Activated B cell treated with CpG ODN at 0.5 μM for 24 hours (primary cell): ENCODE measurements at regions of chr12 and their contacts with region 1.

Region 1: DNA sequence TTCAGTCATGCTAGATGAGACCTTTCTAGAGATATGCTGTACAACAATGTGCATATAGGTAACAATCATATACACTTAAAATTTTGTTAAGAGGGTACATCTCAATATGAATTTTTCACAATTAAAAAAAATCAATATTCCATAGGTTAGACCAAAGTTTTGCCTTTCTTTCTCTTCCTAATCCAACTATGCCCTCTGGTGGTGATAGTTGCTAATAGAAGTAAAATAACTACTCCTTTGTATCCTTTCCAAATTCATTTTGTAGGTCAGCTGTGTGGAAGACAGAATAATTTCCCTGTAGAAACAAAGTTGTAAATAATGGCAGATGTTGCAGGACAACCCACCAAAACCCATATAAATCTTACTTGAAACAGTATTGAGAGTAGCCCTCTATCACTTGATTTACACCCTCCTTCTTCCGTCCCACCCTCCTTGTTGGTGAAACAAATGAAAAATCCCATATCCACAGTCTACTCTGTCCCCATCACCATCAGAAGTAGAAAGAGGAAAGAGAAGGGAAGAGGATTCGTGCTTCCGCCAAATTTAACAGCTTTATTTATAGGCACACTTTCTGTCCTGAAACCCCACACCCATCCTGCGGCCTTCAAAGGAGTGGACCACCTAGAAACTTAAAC is 34.2 kb upstream of the KICS2 start:
- DNase-seq: no peak
- ATAC-seq: no peak
- H3K4me3 Mint-ChIP-seq: no peak overlapping the region
- H3K27ac Mint-ChIP-seq: no peak overlapping the region
- H3K4me1 Mint-ChIP-seq: no peaks in the 10 kb centered on the region
- H3K27me3 Mint-ChIP-seq: peaks cover 5% of the 10 kb centered on the region
- CTCF ChIP-seq: peak; percentile 32

Region 2: DNA sequence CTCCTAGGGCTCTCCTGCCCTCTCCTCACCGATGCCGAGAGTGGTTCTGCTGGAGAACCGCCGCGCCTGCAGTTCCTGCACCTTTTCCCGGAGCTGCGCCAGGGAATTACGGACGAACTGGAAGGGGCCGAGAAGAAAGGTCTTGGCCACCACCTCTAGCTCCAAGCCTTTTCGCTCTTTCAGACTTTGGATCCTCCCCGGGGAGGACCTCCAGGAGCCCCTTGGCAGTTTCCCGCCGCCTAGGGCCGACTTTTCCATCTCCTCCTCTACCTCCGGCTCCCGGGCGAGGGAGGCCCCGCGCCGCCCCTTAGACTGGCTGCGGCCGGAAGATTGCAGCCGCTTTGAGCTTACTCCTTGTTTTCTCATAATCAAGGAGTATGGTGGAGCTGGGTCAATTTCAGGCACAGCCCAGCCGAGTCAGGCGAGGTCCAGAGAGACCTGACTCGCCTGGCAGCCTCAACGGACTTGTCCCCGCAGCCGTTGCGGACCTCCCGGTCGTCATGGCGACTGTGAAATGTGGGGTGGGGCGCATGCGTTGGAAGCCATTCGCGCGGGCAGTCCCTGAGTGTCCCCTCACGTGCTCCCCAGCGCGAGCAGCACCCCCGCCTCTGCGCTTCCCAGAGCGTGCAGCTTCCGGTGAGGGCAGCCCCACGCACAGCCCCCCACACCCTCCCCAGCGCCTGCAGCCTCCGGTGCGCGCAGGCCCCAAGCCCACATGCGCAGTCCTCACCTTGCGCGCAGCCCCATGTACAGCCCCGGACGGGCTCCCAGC is 588.1 kb before region 1 on chr12 and contains the start of gene DPY19L2:
- CTCF ChIA-PET with region 1: no interaction called
- POLR2A ChIA-PET with region 1: no interaction called
- intact Hi-C with region 1: loop called (anchors 1 kb)
- DNase-seq: no peak
- ATAC-seq: peak; percentile 37
- H3K4me3 Mint-ChIP-seq: peak within 1 kb of the TSS; percentile 76
- H3K27ac Mint-ChIP-seq: no peak within 1 kb of the TSS
- H3K4me1 Mint-ChIP-seq: peaks cover 19% of the 10 kb centered on the region
- H3K27me3 Mint-ChIP-seq: peaks cover 17% of the 10 kb centered on the region
- CTCF ChIP-seq: no peak
- total RNA-seq, gene DPY19L2: 0.69 and 0.73 TPM in 2 replicates

Region 3: DNA sequence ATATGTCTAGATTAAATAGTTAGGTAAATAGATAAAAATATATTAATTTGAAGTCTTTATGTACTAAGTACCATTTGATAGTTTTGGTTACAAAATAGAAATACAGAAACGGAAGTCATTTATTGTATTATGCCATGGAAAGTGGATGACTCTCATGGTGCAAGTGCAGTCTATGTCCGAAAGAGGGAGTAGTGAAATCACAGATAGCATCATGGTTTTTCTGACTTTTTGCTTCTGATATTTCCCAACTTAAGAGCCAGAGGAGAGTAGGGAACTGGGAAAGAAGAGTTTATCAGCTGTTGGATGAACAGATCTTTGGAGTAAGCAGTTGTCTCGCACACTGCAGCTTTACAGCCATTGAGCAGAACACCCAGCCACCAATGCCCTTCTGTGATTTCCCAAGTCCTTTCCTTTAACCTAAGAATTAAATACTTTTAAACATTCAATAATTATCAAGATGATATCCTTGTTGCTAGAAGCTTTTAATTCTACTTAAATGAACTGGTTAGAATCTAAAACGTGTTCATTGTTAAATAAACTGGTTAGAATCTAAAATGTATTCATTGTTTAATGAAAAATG is 430.2 kb before region 1 on chr12:
- CTCF ChIA-PET with region 1: interaction called, 12 read pairs
- POLR2A ChIA-PET with region 1: no interaction called
- intact Hi-C with region 1: loop called (anchors 1 kb)
- DNase-seq: no peak
- ATAC-seq: no peak
- H3K4me3 Mint-ChIP-seq: no peak overlapping the region
- H3K27ac Mint-ChIP-seq: no peak overlapping the region
- H3K4me1 Mint-ChIP-seq: peaks cover 6% of the 10 kb centered on the region
- H3K27me3 Mint-ChIP-seq: peaks cover 17% of the 10 kb centered on the region
- CTCF ChIP-seq: no peak

Region 4: DNA sequence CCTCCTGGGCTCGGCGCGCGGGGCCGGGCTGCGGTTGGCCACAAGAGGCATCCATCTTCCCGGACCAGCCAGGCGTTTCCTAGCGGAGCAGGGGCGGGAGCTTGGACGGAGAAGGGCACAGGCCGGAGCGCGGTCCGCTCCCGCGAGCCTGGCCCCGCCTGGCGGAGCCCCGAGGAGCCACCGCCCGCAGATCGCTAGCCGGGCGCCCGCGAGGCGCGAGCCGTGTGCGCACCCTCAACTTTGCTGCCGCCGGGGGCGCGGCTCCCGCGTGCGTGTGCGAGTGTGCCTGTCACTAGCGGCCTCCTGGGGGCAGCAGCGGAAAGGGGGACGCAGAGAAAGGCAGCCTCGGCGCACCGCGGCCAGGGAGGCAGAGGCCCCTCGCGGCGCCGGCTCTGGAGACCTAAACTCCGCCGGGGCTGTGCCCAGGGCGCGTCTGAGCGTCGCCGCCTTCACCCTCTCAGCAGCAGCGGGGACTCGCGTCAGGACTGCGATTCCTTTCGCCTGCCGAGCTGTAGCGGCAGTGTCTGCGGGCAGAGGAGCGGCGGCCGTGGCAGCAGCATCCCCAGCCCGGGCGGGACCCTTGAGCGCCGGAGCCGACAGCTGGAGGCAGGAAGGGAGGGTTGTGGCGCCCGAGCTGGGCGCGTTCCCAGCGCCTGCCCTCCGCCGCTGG is 412.4 kb before region 1 on chr12:
- CTCF ChIA-PET with region 1: interaction called, 14 read pairs
- POLR2A ChIA-PET with region 1: no interaction called
- intact Hi-C with region 1: loop called (anchors 1 kb)
- DNase-seq: peak; percentile 69
- ATAC-seq: peak; percentile 92
- H3K4me3 Mint-ChIP-seq: peak overlapping the region; percentile 74
- H3K27ac Mint-ChIP-seq: no peak overlapping the region
- H3K4me1 Mint-ChIP-seq: peaks cover 9% of the 10 kb centered on the region
- H3K27me3 Mint-ChIP-seq: peaks cover 24% of the 10 kb centered on the region
- CTCF ChIP-seq: peak; percentile 43

Region 5: GRCh38 chr12:64065881-64066451 is 190.3 kb before region 1 on chr12:
- CTCF ChIA-PET with region 1: no interaction called
- POLR2A ChIA-PET with region 1: no interaction called
- intact Hi-C with region 1: no loop called
- DNase-seq: no peak
- ATAC-seq: no peak
- H3K4me3 Mint-ChIP-seq: no peak overlapping the region
- H3K27ac Mint-ChIP-seq: no peak overlapping the region
- H3K4me1 Mint-ChIP-seq: no peaks in the 10 kb centered on the region
- H3K27me3 Mint-ChIP-seq: no peaks in the 10 kb centered on the region
- CTCF ChIP-seq: no peak